GM12878 (cell line): ENCODE measurements at regions of chr14 and their contacts with region 1.

Region 1: DNA sequence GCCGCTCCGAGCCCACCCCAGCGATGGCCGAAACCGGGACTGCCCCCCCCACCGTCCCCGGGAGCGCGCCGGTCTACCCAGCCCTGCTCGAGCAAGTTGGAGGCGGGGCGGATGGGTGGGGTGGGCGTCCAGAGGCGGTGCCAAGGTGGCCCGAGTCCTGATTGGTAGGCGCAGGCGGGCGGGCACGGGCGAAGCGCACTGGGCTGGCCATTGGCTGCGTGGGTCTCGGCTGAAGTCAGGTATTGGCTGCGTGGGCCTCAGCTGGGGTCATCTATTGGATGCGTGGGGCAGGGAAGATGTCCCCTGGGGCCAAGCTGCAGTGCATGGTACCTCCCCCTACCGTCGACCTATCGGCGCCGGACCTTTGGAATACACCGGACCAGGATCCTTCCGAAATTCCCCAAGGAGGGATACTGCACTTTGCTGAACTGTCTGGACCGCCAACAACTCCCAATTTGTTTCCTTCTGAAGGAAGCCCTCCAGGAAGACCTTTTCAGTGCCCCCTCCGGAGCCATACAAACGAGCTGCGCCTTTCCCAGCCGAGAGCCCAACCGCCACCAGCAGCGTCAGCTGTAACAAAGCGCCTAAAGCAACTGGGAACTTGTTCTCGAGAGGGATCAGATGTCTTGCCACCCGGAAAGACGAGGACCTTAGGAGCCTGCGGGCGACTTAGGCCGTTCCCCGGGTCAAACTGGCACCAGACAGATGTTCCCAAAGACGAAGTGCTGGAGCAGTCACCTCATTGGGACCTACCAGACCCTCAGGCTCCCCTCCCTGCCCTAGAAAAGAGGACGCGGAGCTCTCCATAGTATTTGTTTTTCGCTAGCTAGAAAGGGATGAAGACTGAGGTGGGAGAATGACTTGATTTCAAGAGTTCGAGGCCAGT is at the start of gene HOMEZ:
- DNase-seq: peak; percentile 95
- ATAC-seq: peak; percentile 99
- H3K4me3 ChIP-seq: peak within 1 kb of the TSS; percentile 84
- H3K27ac ChIP-seq: peak within 1 kb of the TSS; percentile 85
- H3K4me1 ChIP-seq: peaks cover 6% of the 10 kb centered on the region; the same call in 1 of the 2 replicates
- H3K27me3 ChIP-seq: no peaks in the 10 kb centered on the region
- CTCF ChIP-seq: no peak
- EP300 ChIP-seq: no peak
- POLR2A ChIP-seq: peak; percentile 71
- RAD21 ChIP-seq: no peak
- polyA plus RNA-seq, gene HOMEZ: 2.6 to 3.6 TPM

Region 2: DNA sequence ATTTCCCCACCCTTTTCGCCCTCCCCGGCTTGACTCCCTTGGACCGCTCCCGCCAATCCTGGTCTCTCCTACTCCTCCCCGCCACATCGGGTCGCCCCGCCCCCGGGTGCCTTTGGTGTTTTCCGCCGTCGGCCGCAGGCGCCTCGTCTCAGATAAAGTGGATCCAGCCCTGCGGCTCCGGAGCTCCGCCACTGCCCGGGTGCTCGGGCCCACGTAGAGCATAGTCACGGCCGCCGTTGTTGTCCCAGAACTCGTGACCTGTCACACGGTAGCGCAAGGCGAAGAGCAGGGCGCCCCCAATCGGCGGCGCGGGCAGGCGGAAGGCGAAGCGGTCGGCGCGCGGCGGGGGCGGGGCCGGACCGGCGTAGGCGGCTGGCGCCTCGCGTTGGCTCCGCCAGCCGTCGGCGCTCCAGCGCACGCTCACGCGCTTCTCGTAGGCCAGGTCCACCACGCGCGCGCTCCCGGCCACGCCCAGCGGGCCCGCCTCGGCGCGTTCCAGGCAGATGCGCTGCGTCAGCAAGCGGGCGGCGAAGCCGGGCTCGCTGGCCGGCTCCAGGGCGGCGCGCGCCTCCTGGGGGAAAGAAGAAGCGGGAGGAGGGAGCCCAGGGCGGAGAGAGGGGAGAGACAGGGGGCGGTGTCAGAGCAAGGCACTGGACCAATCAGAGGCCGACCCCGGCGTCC is 15.2 kb after region 1 on chr14:
- CTCF ChIA-PET with region 1: interaction called, 36 read pairs
- POLR2A ChIA-PET with region 1: interaction called, 28 read pairs
- RAD21 ChIA-PET with region 1: interaction called, 21 read pairs
- SMC1A ChIA-PET with region 1: interaction called, 34 read pairs
- in situ Hi-C with region 1: no loop called
- intact Hi-C with region 1: no loop called
- DNase-seq: peak; percentile 91
- ATAC-seq: peak; percentile 90
- H3K4me3 ChIP-seq: peak overlapping the region; percentile 73
- H3K27ac ChIP-seq: peak overlapping the region; percentile 85
- H3K4me1 ChIP-seq: peaks cover 11% of the 10 kb centered on the region
- H3K27me3 ChIP-seq: no peaks in the 10 kb centered on the region
- CTCF ChIP-seq: peak; percentile 72 to 88 (median 73)
- EP300 ChIP-seq: peak; percentile 39; a peak in 1 of 4 replicates
- POLR2A ChIP-seq: peak; percentile 78
- RAD21 ChIP-seq: peak; percentile 43; the same call in 1 of the 2 replicates

Region 3: GRCh38 chr14:23306410-23307145 is 20.3 kb after region 1 on chr14 and contains the start of gene BCL2L2:
- CTCF ChIA-PET with region 1: interaction called, 16 read pairs
- POLR2A ChIA-PET with region 1: interaction called, 28 read pairs
- RAD21 ChIA-PET with region 1: interaction called, 21 read pairs
- SMC1A ChIA-PET with region 1: interaction called, 34 read pairs
- in situ Hi-C with region 1: no loop called
- intact Hi-C with region 1: no loop called
- DNase-seq: no peak
- ATAC-seq: peak; percentile 65
- H3K4me3 ChIP-seq: peak within 1 kb of the TSS; percentile 100
- H3K27ac ChIP-seq: peak within 1 kb of the TSS; percentile 91
- H3K4me1 ChIP-seq: peaks cover 20% of the 10 kb centered on the region
- H3K27me3 ChIP-seq: no peaks in the 10 kb centered on the region
- CTCF ChIP-seq: no peak
- EP300 ChIP-seq: no peak
- POLR2A ChIP-seq: peak; percentile 91
- RAD21 ChIP-seq: no peak
- polyA plus RNA-seq, gene BCL2L2: 1.4 to 3.1 TPM

Region 4: DNA sequence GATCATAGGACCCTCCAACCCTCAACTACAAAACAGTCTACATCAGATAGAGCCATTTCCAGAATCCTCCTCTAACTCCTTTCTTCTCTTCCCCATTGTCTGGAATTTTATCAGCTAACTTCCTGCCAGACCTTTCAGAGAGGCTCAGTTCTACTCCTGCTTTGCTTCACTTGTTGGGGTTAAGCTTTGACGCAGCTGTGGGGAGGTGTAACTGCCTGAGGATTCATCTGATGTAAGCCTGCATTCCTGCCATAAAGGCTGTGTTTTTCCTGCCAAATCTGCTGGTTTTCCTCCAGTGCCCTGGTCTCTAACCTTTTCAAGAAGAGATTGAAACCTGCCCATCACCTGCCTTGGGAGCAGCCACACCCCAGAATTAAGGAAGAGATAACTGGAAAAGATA is 366.8 kb after region 1 on chr14:
- CTCF ChIA-PET with region 1: no interaction called
- POLR2A ChIA-PET with region 1: no interaction called
- RAD21 ChIA-PET with region 1: no interaction called
- SMC1A ChIA-PET with region 1: no interaction called
- in situ Hi-C with region 1: no loop called
- intact Hi-C with region 1: no loop called
- DNase-seq: no peak
- ATAC-seq: no peak
- H3K4me3 ChIP-seq: no peak overlapping the region
- H3K27ac ChIP-seq: no peak overlapping the region
- H3K4me1 ChIP-seq: no peaks in the 10 kb centered on the region
- H3K27me3 ChIP-seq: no peaks in the 10 kb centered on the region; a peak in 1 of 4 replicates
- CTCF ChIP-seq: no peak
- EP300 ChIP-seq: no peak
- POLR2A ChIP-seq: no peak
- RAD21 ChIP-seq: no peak